Activated CD4-positive, alpha-beta memory T cell treated with anti-CD3 and anti-CD28 coated beads for 36 hours (primary cell): ENCODE measurements at regions of chr2 and their contacts with region 1.

Region 1: DNA sequence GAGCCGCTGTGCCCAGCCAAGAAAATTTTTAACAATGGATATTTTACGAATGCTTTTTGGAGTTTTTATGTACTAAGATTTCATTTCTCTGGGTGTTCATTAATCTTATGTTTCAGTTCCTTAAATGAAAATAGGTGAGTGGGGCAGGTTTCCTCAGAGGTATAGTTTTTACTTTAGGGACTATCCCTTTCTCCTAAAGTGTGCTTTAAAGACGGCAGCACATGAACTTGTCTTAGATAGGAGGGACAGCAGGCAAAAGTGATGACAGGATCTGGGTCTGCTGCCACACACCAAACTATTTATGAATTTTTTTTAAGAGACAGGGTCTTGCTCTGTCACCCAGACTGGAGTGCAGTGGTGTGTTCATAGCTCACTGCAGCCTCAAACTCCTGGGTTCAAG is 8.0 kb upstream of the REL start:
- DNase-seq: peak; percentile 36
- H3K4me3 Mint-ChIP-seq: peak overlapping the region; percentile 29
- H3K27ac Mint-ChIP-seq: peak overlapping the region; percentile 90
- H3K4me1 Mint-ChIP-seq: peaks cover 29% of the 10 kb centered on the region
- H3K27me3 Mint-ChIP-seq: no peaks in the 10 kb centered on the region

Region 2: DNA sequence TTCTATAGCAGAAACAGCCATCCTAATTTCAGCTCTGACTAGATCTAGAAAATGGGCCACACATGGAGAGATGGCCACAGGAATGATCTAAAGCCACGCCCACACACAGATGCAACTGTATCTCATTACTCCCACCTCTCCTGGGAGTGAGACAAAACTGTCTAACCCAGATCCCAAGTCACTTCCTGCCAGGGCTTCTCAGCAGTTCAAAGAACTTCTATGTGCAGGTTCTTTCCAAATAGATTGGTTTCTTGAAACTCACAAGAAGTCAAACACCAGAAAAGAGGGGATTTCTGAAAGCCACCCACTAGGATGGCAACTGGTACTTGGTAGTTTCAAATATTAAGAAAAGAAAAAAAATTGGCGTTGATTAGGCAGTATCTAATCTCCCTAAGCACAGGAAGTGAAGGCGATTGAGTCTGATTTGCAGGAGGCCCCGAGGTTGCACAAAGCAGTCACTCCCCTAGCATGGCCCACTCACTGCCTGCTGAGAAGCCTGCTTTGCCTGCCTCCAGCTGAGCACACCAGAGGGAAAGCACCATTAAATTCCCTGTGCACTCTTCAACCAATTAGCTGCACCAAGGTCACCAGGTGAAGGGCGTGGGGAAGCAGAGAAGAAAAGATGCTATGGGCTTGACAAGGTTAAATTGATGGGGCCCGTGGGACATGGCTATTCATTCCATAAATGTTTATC is 66.2 kb before region 1 on chr2:
- CTCF ChIA-PET with region 1: no interaction called
- POLR2A ChIA-PET with region 1: interaction called, 3 read pairs
- intact Hi-C with region 1: loop called (anchors 1 kb)
- DNase-seq: peak; percentile 81
- H3K4me3 Mint-ChIP-seq: peak overlapping the region; percentile 36
- H3K27ac Mint-ChIP-seq: peak overlapping the region; percentile 88
- H3K4me1 Mint-ChIP-seq: peaks cover 49% of the 10 kb centered on the region
- H3K27me3 Mint-ChIP-seq: no peaks in the 10 kb centered on the region

Region 3: DNA sequence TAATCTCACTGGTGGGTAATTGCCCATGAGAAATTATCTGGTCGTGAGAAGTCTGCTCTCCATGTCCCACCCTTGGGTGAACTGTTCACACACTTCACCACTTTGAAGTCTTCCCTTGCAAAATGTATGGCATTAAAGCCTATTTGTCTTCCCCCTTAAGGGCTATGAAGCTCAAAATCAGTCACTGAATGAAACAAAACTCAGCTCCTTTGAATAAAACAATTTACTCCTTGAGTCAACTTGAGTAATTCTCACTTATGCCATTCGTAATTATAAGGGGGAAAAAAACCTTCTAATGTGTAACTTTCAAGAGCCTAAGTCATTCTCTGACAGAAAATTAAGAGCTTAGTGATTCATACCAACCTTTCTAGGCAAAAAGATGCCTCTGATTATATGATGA is 40.8 kb before region 1 on chr2:
- CTCF ChIA-PET with region 1: no interaction called
- POLR2A ChIA-PET with region 1: interaction called, 7 read pairs
- intact Hi-C with region 1: loop called (anchors 1 kb)
- DNase-seq: no peak
- H3K4me3 Mint-ChIP-seq: no peak overlapping the region
- H3K27ac Mint-ChIP-seq: peak overlapping the region; percentile 53
- H3K4me1 Mint-ChIP-seq: peaks cover 23% of the 10 kb centered on the region
- H3K27me3 Mint-ChIP-seq: peaks cover 4% of the 10 kb centered on the region

Region 4: DNA sequence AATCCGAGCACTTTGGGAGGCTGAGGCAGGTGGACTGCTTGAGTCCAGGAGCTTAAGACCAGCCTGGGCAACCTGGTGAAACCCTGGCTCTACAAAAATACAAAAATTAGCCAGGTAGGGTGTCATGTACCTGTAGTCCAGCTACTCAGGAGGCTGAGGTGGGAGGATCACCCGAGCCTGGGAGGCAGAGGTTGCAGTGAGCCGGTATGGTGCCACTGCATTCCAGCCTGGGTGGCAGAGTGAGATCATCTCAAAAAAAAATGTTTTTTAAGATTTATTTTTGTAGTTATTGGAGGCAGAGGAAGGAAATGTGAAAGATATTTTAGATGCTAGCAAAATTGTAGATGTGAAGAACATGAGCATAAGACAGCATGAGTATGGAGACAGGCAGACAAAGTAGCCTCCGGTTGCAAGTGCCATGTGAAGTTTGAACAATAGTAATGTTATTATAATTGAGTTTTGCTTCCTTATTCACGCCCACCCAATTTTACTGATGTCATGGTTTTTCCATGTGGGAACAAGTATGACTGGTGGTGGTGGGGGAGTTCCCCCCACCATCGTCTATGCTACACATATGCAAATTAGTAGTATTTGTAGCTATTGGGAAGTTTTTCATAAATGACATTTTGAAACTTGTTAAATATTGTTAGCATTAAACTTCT is 26.0 kb after region 1 on chr2:
- CTCF ChIA-PET with region 1: no interaction called
- POLR2A ChIA-PET with region 1: no interaction called
- intact Hi-C with region 1: loop called (anchors 1 kb)
- DNase-seq: peak; percentile 74
- H3K4me3 Mint-ChIP-seq: peak overlapping the region; percentile 43
- H3K27ac Mint-ChIP-seq: peak overlapping the region; percentile 85
- H3K4me1 Mint-ChIP-seq: peaks cover 31% of the 10 kb centered on the region
- H3K27me3 Mint-ChIP-seq: no peaks in the 10 kb centered on the region

Region 5: DNA sequence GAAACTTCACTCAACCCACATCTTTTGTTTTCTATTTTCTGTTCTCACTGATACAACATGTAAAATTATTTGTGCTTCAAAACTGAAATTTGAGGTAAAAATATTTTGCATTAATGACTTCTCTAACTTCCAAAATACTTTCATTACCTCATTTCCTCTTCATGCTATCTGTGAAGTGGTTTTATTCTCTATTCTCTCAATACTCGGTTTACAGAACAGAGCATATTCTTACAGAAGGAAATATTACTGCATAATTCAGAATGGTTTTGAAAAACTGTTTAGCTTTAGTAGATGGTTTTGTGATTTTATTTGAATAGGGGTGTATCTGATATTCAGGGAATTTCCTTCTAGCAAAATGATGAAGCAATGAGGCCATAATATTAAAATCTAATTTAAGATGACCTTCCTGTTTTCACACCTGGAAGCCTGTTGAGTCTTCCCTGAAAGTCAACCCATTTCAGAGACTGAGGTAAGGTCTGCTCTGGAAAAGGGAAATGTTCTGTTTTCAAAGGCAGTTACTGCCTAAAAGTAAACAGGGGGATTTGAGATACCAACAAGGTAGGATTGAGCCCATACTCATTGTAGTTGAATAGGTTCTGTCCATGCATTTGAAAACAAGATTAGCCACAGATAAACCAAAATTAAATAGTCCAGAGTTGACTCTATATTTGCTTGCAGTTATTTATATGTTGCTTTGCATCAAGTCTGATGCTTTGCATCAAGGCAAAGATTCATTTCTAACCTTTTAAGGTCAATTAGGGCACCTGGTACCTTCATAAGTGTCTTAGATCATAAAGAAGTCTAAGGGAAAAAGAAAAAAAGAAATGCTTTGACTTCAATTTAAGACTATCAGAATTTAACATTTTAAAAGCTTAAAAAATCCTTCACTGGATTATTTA is 93.4 kb after region 1 on chr2:
- CTCF ChIA-PET with region 1: no interaction called
- POLR2A ChIA-PET with region 1: no interaction called
- intact Hi-C with region 1: loop called (anchors 1 kb)
- DNase-seq: no peak
- H3K4me3 Mint-ChIP-seq: no peak overlapping the region
- H3K27ac Mint-ChIP-seq: no peak overlapping the region
- H3K4me1 Mint-ChIP-seq: peaks cover 40% of the 10 kb centered on the region
- H3K27me3 Mint-ChIP-seq: no peaks in the 10 kb centered on the region

Region 6: GRCh38 chr2:60976875-60977561 is 103.6 kb after region 1 on chr2:
- CTCF ChIA-PET with region 1: no interaction called
- POLR2A ChIA-PET with region 1: no interaction called
- intact Hi-C with region 1: loop called (anchors 1 kb)
- DNase-seq: peak; percentile 29
- H3K4me3 Mint-ChIP-seq: no peak overlapping the region
- H3K27ac Mint-ChIP-seq: peak overlapping the region; percentile 35
- H3K4me1 Mint-ChIP-seq: peaks cover 30% of the 10 kb centered on the region
- H3K27me3 Mint-ChIP-seq: no peaks in the 10 kb centered on the region

Region 7: GRCh38 chr2:60992985-60993392 is 119.6 kb after region 1 on chr2:
- CTCF ChIA-PET with region 1: no interaction called
- POLR2A ChIA-PET with region 1: no interaction called
- intact Hi-C with region 1: loop called (anchors 5 kb)
- DNase-seq: peak; percentile 24
- H3K4me3 Mint-ChIP-seq: no peak overlapping the region
- H3K27ac Mint-ChIP-seq: no peak overlapping the region
- H3K4me1 Mint-ChIP-seq: peaks cover 8% of the 10 kb centered on the region
- H3K27me3 Mint-ChIP-seq: no peaks in the 10 kb centered on the region